SK-MEL-5 (cell line): ENCODE measurements at regions of chr11 and their contacts with region 1.

Region 1: DNA sequence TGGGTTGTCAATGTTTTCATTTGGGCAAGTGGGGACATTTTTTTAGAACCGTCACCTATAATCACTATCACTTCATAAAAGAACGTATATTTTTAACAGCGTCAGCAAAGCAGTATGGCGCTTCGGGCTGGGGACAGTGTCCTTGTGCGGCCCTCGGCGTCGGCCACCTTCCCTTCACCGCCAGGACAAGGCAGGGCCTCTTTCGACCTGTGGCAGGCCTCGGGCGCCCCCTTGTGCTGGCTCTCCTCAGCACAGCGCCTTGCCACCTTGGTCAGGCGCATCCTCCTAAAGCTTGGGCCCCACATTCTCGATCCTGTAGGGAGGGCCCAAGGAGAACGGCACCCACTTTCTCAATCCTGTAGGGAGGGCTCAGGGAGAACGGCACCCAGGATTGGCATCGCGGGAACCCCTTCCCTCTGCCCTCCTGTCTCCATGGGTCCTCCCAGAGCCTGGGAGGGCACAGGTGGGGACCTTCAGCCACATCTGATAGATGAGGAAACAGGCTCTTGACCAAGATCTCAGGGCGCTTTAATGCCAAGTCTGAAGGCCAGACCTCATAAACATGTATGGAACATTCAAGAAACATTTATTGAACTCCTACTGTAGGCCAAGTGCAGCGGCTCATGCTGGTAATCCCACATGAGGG is 11.5 kb upstream of the FADD start:
- DNase-seq: peak; percentile 92

Region 2: DNA sequence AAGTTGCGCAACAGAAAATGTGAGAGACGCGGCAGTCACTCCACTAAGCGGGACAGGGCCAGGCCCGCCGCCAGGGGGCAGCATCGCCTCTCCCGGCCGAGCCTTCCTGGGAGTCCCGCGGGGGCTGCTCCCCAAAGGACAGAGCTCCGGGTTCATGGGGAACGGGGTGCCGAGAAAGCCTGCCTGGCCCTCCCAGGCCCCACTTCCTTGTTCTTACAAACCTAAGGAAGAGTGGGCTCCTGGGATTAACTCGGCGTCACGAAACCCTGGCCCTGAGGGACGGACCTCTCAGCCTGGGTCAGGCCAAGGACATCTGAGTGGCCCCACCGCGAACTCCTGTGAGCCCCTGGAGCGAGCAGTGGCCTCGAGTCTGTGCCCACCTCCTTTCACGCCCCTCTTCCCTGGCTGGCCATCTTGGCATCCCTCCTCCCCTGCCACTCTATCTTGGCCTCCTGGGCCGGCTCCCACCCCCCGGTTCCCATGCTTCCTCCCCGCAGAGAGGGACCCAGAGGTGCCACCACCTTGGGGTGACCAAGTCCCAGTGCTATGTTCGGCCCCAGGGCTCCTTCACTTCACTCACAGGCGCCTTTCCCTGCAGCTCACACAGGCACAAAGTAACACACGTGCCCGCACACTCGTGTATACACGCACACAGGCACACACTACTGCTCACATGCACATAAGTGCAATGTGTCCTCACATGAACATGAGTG is 272.5 kb before region 1 on chr11:
- in situ Hi-C with region 1: loop called (anchors 25 kb)
- DNase-seq: peak; percentile 92

Region 3: GRCh38 chr11:70016666-70017367 is 174.8 kb before region 1 on chr11:
- in situ Hi-C with region 1: loop called (anchors 25 kb)
- DNase-seq: no peak

Region 4: DNA sequence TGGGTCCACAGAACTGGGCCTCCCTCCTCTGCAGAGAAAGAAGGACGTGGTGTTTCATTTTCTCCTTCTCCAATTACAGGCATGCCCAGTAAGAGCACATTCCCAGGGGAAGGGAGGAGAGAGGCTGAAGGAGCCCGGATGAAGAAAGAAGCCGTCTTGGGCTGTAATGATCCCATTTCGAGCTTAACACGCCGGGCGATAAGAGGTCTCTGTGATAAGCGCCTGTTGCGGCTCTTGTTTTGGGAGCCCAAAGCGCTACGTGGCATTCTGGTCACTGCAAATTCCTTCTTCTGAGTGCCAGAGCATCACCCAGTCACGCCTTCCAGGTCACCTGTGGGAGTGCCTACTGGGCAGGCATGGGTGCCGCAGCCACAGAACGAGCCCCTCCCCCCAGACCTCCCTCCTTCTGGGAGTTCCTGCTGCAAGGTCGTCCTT is 56.0 kb before region 1 on chr11:
- in situ Hi-C with region 1: no loop called
- DNase-seq: no peak

Region 5: DNA sequence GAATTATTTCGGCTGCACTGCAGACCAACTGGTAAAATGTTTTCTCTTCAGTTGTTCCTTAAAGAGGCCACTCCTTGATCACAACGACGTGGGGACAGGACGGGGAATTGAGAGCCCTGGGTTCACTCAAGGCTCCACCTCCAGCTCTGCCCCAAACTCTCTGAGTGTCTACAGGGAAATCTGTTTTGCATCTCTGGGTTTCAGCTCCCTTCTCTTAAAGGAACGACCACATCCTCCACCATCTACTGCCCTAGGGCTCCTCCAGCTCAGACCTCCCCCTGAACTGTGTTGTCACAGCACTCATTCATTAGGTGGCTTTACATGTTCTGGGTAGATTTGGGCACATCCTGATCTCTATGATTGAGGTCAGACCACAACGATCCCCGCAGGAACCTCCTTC is 73.7 kb after region 1 on chr11:
- in situ Hi-C with region 1: no loop called
- DNase-seq: no peak

Region 6: DNA sequence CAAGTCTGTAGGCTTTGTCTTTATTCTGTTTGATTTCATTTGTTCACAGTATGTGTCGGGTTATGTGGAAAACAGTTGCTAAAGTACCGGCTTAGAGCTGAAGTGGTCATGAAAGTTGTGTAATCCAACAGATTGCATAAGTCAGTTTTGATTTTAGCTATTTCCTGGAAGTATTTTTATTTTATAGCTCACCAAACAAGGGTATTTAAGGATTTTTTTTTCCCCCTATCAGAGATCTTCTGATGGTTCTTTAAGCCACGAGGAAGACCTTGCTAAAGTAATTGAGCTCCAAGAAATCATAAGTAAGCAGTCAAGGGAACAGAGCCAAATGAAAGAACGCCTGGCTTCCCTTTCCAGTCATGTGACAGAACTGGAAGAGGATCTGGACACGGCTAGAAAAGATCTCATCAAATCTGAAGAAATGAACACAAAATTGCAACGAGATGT is 134.8 kb after region 1 on chr11:
- in situ Hi-C with region 1: no loop called
- DNase-seq: no peak